ENCODE measurements at regions of chr7 and their contacts with region 1.

Region 1: DNA sequence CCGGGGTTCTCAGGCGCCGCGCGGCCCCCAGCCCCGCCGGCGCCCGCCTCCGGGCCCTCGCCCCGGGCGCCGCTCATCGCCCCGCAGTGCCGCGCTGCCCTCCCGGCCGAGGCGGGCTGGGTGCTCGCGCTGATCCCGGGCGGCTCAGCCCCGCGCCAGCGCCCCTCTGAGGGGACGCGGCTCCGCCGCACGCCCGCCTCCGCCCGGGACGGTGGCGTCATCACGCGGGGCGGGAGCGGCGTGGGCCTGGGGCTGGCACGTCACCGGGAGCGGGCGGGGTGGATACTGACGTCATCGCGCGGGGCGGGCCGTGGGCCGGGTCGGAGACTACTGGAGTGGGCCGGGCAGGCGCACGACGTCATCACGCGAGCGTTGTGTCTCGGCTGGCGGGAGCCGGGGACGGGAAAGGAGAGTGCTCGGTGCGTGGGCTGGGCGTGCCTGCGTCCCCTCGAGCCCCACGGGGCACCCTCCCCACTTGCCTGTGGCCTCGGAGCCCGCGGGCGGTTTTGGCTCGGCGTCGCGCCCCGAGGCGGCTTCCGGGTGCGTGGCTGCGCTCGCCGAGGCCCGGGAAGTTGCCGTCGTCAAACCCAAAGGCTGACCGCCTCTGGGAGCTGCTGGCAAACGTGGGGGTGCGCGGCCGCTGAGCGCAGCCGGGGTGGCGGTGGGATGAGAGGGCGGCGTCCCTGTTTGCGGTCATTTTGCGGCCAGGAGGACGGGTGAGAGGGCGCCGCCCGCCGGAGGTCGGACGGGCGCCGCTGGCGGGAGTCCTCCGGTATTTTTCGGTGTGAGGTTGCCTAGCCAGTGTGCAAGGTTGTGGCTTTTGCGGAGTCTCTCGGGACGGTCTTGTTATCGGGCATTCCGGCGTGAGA is at the start of gene ESYT2:
- DNase-seq: peak; percentile 95 to 100 (median 98)
- H3K4me3 ChIP-seq: peak within 1 kb of the TSS; percentile 66 to 99 (median 88)
- H3K27ac ChIP-seq: peak within 1 kb of the TSS; percentile 61 to 100 (median 97)
- H3K27me3 ChIP-seq: no peaks in the 10 kb centered on the region
- CTCF ChIP-seq: peak in 34 of 56 donors; percentile 4 to 55 (median 22)
- total RNA-seq, gene ESYT2: 40.3 to 83.9 (median 56.3) TPM

Region 2: DNA sequence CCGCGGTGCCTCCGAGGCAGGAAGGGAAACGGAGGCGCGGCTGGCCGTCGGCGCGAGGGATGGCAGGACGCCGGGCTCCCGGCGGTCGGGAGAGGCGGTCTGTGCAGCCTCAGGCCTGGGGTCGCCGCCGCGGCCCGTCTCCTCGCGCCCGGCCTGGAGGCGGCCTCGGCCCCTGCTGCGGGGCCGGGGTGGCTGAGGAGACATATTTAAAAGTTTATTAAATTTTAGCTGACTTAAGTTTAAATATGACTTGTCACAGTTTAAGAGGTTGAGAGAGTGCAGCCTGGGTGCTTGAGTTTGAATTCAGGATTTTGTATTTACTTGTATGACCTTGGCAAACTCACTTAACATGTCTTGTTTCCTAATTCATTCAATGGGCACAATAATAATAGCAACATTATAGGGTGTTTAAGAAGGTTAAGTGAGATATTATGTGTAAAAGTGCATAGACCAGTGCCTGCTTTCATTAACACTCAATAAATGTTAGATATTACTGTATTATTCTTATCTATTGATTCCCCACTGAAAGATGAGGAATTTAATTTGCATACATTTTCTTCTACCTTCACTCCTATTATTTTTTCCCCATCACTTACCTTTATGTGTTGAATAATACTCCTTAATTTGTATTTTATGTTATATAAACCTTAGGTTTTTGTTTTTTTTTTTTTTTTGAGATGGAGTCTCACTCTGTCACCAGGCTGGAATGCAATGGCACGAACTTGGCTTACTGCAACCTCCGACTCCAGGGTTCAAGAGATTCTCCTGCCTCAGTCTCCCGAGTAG is 27.5 kb after region 1 on chr7:
- intact Hi-C with region 1: loop called (anchors 1 kb)
- DNase-seq: no peak
- H3K4me3 ChIP-seq: peak overlapping the region; percentile 66 to 99 (median 90)
- H3K27ac ChIP-seq: peak overlapping the region in 58 of 59 donors; percentile 6 to 92 (median 82)
- H3K27me3 ChIP-seq: no peaks in the 10 kb centered on the region
- CTCF ChIP-seq: no peak

Region 3: DNA sequence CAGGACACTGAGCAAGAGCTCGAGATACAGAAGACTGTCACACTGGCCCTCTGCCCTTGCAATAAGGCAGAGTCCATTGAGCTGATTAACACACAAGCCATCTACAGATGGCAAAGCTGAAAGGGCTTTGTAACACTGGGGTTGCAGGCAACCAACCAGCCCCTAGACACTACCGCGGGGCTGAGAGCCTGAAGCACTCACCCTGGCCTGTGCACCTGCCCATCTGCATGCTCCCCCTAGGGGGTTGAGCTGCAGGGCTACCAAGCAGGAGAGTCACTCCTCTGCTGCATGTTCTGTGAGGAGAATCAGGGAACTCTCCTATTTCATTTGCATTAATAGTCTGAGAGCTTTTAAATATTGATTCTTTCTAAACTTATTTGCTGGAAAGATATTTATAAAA is 443.2 kb after region 1 on chr7:
- intact Hi-C with region 1: no loop called
- DNase-seq: no peak
- H3K4me3 ChIP-seq: no peak overlapping the region
- H3K27ac ChIP-seq: no peak overlapping the region
- H3K27me3 ChIP-seq: peaks cover 0 to 6% (median 0%) of the 10 kb centered on the region in 45 donors
- CTCF ChIP-seq: no peak

Measured in dorsolateral prefrontal cortex (tissue), 120 donors.